ENCODE measurements at regions of chr1 and their contacts with region 1.

Region 1: GRCh38 chr1:171801487-171801891 is 20.0 kb downstream of the METTL13 start:
- DNase-seq: no peak
- ATAC-seq: peak; percentile 81
- H3K4me3 ChIP-seq: no peak overlapping the region
- H3K27ac ChIP-seq: no peak overlapping the region
- H3K4me1 ChIP-seq: peaks cover 0 to 4% of the 10 kb centered on the region in 2 experiments; a peak in 1 of 4 replicates
- H3K27me3 ChIP-seq: no peaks in the 10 kb centered on the region
- CTCF ChIP-seq: peak; percentile 73 to 86 (median 81)
- POLR2A ChIP-seq: no peak
- RAD21 ChIP-seq: peak; percentile 86

Region 2: GRCh38 chr1:171515299-171515698 is 286.2 kb before region 1 on chr1:
- CTCF ChIA-PET with region 1: no interaction called
- POLR2A ChIA-PET with region 1: no interaction called
- RAD21 ChIA-PET with region 1: no interaction called
- intact Hi-C with region 1: no loop called
- DNase-seq: no peak
- ATAC-seq: no peak
- H3K4me3 ChIP-seq: no peak overlapping the region
- H3K27ac ChIP-seq: no peak overlapping the region
- H3K4me1 ChIP-seq: no peaks in the 10 kb centered on the region
- H3K27me3 ChIP-seq: no peaks in the 10 kb centered on the region
- CTCF ChIP-seq: no peak
- POLR2A ChIP-seq: no peak
- RAD21 ChIP-seq: no peak

Region 3: DNA sequence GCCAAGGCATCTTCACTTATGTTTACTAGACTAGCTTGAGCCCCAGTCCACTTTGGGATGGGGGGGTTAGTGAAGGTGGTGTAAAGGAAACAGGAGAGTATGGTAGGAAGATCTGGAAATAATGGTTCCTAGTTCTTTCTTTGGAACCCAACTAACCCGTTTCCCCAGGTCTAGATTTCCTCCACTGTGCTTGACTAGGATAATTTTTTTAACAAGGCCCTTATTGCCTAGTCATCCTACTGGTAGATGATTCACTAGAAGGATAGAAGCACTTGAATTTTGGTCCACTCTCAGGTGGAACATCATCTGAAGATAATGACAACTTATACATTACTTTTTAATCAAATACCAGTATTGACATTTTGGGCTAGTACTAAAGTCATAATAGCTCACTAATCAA is 225.3 kb before region 1 on chr1:
- CTCF ChIA-PET with region 1: no interaction called
- POLR2A ChIA-PET with region 1: no interaction called
- RAD21 ChIA-PET with region 1: no interaction called
- intact Hi-C with region 1: no loop called
- DNase-seq: no peak
- ATAC-seq: no peak
- H3K4me3 ChIP-seq: no peak overlapping the region
- H3K27ac ChIP-seq: no peak overlapping the region
- H3K4me1 ChIP-seq: no peaks in the 10 kb centered on the region
- H3K27me3 ChIP-seq: no peaks in the 10 kb centered on the region
- CTCF ChIP-seq: no peak
- POLR2A ChIP-seq: no peak
- RAD21 ChIP-seq: no peak

Region 4: GRCh38 chr1:171811672-171812071 is 10.2 kb after region 1 on chr1:
- CTCF ChIA-PET with region 1: no interaction called
- POLR2A ChIA-PET with region 1: no interaction called
- RAD21 ChIA-PET with region 1: no interaction called
- intact Hi-C with region 1: no loop called
- DNase-seq: no peak
- ATAC-seq: no peak
- H3K4me3 ChIP-seq: no peak overlapping the region
- H3K27ac ChIP-seq: no peak overlapping the region
- H3K4me1 ChIP-seq: no peaks in the 10 kb centered on the region
- H3K27me3 ChIP-seq: no peaks in the 10 kb centered on the region
- CTCF ChIP-seq: no peak
- POLR2A ChIP-seq: no peak
- RAD21 ChIP-seq: no peak

Region 5: GRCh38 chr1:171984850-171985485 is 183.5 kb after region 1 on chr1:
- CTCF ChIA-PET with region 1: interaction called, 237 read pairs
- POLR2A ChIA-PET with region 1: no interaction called
- RAD21 ChIA-PET with region 1: interaction called, 11 to 16 read pairs
- intact Hi-C with region 1: loop called (anchors 1 kb)
- DNase-seq: peak; percentile 29
- ATAC-seq: peak; percentile 71
- H3K4me3 ChIP-seq: no peak overlapping the region
- H3K27ac ChIP-seq: no peak overlapping the region
- H3K4me1 ChIP-seq: no peaks in the 10 kb centered on the region
- H3K27me3 ChIP-seq: no peaks in the 10 kb centered on the region
- CTCF ChIP-seq: peak; percentile 81 to 84 (median 81)
- POLR2A ChIP-seq: no peak
- RAD21 ChIP-seq: peak; percentile 88

Measured in HCT116 (cell line).